ENCODE measurements at regions of chr4 and their contacts with region 1.

Region 1: GRCh38 chr4:112765317-112765975 is 128.5 kb downstream of the LARP7 start:
- DNase-seq: no peak
- H3K4me3 ChIP-seq: no peak overlapping the region
- CTCF ChIP-seq: peak; percentile 36

Region 2: DNA sequence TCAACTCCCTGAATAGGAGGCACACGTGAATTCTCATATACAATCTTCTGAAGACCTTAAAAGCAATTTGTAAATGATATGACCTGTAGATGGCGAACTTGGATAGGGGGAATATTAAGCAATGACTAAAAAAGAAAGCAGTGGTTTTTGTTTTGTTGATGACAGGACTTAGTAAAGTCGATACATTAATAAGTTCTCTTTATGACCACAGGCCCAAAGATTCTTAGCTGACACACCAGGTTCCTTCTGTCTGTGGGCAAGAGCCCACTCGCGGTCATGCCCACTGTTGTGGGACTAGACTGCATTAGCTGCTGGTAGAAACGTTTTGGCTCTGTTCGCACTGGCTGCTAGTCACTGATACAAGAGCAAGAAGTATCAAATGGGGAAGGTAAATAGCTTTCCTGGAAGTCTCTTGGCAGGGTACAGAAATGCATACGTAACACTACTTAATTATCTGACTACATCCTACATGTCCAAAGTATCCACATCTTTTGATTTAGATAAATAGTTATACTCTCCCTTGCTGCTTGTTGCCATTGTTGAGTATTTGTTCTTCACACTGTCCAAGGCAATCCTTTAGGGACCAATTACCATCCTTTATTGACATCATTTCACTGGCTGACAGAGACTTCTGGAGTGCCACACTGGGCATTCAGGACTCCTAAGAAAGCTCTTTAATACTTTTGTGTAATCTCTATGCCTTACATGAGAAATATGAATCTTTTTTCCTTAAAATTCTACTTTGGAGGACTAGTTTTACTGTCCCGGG is 437.3 kb before region 1 on chr4:
- CTCF ChIA-PET with region 1: interaction called, 10 read pairs
- POLR2A ChIA-PET with region 1: no interaction called
- DNase-seq: peak; percentile 31
- H3K4me3 ChIP-seq: no peak overlapping the region
- CTCF ChIP-seq: peak; percentile 22

Region 3: GRCh38 chr4:112642526-112642925 is 122.9 kb before region 1 on chr4:
- CTCF ChIA-PET with region 1: interaction called, 25 read pairs
- POLR2A ChIA-PET with region 1: no interaction called
- DNase-seq: no peak
- H3K4me3 ChIP-seq: no peak overlapping the region
- CTCF ChIP-seq: no peak

Region 4: DNA sequence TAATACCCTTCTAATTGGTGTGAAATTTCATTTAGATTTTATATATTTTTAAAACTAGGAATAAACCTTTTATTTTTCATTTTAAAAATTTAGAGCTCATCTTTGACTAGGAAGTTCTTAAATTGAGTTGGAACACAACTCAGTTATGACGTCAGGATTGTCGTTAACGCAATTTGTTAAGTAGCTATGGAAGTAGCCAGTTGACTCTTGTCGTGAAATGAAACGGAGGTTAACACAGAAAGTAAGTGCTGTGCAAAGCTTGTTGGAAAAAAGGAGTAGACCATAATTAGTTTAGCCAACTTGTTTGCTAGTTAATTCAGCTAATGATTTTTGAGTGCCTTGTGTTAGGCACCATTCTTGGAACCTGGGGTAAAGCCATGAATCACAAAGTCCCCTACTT is 110.2 kb before region 1 on chr4:
- CTCF ChIA-PET with region 1: interaction called, 14 read pairs
- POLR2A ChIA-PET with region 1: no interaction called
- DNase-seq: no peak
- H3K4me3 ChIP-seq: no peak overlapping the region
- CTCF ChIP-seq: no peak

Region 5: GRCh38 chr4:112677519-112678091 is 87.8 kb before region 1 on chr4:
- CTCF ChIA-PET with region 1: no interaction called
- POLR2A ChIA-PET with region 1: no interaction called
- DNase-seq: no peak
- H3K4me3 ChIP-seq: no peak overlapping the region
- CTCF ChIP-seq: no peak

Region 6: DNA sequence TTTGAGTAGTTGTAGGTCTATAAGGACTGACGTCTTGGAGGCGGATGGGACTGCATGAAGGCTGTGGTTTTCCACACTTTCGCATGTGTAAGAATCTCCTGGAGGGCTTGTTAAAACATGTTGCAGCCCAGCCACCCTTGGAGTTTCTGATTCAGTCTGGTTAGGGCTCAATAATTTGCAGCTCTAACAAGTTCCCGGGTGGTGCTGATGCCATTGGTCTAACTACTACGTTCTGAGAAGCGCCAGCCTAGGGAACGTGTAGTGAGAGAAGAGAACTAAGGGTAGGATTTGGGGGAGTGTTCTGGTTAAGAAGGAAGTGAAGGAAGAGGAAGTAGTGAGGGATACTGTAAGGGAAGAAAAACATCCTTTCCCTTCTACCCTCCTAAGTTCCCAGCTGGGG is 10.4 kb after region 1 on chr4:
- CTCF ChIA-PET with region 1: interaction called, 30 read pairs
- POLR2A ChIA-PET with region 1: no interaction called
- DNase-seq: no peak
- H3K4me3 ChIP-seq: no peak overlapping the region
- CTCF ChIP-seq: no peak

Region 7: DNA sequence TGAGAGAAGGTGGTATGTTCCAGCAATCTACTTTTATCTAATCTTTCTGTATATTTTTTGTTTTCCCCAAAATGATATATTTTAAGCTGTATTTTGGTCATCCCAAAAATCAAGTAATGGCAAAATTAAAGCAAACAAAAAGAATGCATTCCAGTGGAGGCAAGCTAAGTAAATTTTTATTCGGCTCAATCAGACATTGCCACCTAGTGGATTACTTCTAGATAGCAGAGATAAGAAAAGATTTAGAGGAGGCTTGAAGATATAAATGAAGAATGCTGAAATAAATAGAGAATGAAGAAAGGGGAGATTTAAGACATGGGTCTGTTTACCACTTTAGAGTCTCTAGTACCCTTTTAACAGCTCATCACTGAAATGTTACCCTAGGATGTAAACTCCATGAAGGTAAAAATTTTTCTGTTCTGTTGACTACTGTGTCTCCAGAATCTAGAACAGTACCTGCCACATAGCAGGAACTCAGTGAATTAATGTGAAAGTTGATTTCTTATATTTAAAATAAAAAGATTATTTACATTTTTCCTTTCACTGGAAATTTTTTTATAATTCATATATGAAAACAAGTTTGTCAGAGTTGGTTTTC is 173.1 kb after region 1 on chr4:
- CTCF ChIA-PET with region 1: interaction called, 289 read pairs
- POLR2A ChIA-PET with region 1: no interaction called
- DNase-seq: peak; percentile 7
- H3K4me3 ChIP-seq: no peak overlapping the region
- CTCF ChIP-seq: peak; percentile 50

Measured in AG04449 (cell line).